ENCODE measurements at regions of chr19 and their contacts with region 1.

Region 1: DNA sequence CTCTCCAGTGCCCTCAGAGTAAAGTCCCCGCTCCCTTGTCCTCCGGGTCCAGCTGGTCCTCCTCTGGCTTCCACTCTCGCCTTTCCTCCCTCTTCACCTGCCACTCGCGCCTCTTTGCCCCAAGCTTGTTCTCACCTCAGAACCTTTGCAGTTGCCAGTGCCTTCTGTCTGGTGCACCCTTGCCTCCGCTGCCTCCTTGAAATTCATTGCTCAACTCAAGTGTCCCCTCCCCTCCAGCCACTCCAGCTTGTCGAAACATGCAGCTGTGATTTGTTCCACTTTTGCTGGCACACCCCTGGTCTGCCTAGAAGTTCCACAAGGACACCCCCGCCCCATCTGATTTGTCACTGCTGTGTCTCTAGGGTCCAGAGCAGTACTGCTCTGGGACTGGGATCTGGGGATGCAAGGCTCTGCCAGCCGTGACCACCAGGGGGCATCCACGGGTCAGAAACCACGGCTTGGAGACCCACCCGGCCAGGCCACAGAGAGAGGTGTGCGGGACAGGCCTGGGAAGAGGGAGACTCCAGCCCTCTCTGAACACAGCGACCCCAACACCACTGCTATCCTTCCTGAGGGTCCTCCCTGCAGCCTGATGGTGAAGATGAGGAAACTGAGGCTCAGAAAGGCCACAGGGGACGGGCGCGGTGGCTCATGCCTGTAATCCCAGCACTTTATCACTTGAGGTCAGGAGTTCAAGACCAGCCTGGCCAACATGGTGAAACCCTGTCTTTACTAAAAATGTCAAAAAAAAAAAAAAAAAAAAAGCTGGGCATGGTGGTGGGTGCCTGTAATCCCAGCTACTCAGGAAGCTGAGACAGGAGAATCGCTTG is 49.9 kb downstream of the AP1M1 start:
- DNase-seq: peak; percentile 87
- H3K4me3 Mint-ChIP-seq: no peak overlapping the region
- H3K27ac Mint-ChIP-seq: peak overlapping the region; percentile 55
- H3K4me1 Mint-ChIP-seq: peaks cover 28% of the 10 kb centered on the region
- H3K27me3 Mint-ChIP-seq: peaks cover 19% of the 10 kb centered on the region

Region 2: GRCh38 chr19:16197622-16198369 is 49.8 kb before region 1 on chr19 and contains the start of gene AP1M1:
- CTCF ChIA-PET with region 1: no interaction called
- POLR2A ChIA-PET with region 1: no interaction called
- DNase-seq: peak; percentile 99
- H3K4me3 Mint-ChIP-seq: peak within 1 kb of the TSS; percentile 87
- H3K27ac Mint-ChIP-seq: peak within 1 kb of the TSS; percentile 95
- H3K4me1 Mint-ChIP-seq: peaks cover 55% of the 10 kb centered on the region
- H3K27me3 Mint-ChIP-seq: no peaks in the 10 kb centered on the region
- total RNA-seq, gene AP1M1: 131 to 151 TPM

Region 3: GRCh38 chr19:16266586-16266942 is 19.0 kb after region 1 on chr19:
- CTCF ChIA-PET with region 1: interaction called, 12 read pairs
- POLR2A ChIA-PET with region 1: interaction called, 5 read pairs
- DNase-seq: peak; percentile 86
- H3K4me3 Mint-ChIP-seq: peak overlapping the region; percentile 2
- H3K27ac Mint-ChIP-seq: peak overlapping the region; percentile 76
- H3K4me1 Mint-ChIP-seq: peaks cover 62% of the 10 kb centered on the region
- H3K27me3 Mint-ChIP-seq: peaks cover 11% of the 10 kb centered on the region

Region 4: DNA sequence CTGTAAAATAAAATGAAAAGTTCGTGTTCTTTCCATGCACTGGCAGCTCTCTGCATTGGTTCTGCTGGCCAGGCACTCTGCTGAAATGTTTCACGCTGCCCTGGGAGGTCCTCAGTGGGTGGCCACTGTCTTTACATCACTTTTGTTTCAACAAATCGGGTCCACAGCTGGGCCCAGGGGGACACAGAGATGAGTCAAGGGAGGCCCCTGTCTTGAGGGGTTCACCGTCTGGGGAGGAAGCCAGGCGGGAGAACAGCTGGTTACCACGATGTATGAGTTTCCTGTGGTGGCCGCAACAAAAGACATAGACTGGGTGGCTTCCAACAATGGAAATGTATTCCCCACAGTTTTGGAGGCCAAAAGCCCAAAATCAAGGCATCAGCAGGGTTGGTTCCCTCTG is 71.9 kb after region 1 on chr19:
- CTCF ChIA-PET with region 1: interaction called, 12 read pairs
- POLR2A ChIA-PET with region 1: interaction called, 31 read pairs
- DNase-seq: no peak
- H3K4me3 Mint-ChIP-seq: no peak overlapping the region
- H3K27ac Mint-ChIP-seq: no peak overlapping the region
- H3K4me1 Mint-ChIP-seq: peaks cover 21% of the 10 kb centered on the region
- H3K27me3 Mint-ChIP-seq: peaks cover 40% of the 10 kb centered on the region

Region 5: DNA sequence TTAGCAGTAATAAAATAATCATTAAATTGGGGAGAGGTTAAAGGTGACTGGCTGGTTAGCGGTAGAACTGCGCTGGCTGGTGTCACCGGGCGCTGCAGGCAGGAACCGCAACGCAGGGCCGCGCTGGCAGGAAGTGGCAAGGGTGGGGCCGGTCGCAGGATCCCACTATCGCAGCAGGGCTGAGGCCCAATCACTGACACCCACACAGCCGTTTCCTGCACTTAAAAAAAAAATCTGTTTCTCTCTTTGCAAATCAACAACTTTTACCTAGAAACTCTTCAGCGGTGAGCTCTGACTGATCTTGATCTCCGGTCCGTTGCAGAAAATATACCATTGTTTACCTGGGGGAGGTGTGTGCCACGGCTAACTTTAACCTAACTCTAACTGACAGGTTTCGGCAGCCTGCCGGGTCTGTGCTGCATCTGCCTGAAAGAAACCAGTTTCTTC is 124.0 kb after region 1 on chr19:
- CTCF ChIA-PET with region 1: interaction called, 17 read pairs
- POLR2A ChIA-PET with region 1: interaction called, 41 read pairs
- DNase-seq: peak; percentile 96
- H3K4me3 Mint-ChIP-seq: no peak overlapping the region
- H3K27ac Mint-ChIP-seq: no peak overlapping the region
- H3K4me1 Mint-ChIP-seq: peaks cover 7% of the 10 kb centered on the region
- H3K27me3 Mint-ChIP-seq: peaks cover 2% of the 10 kb centered on the region

Region 6: DNA sequence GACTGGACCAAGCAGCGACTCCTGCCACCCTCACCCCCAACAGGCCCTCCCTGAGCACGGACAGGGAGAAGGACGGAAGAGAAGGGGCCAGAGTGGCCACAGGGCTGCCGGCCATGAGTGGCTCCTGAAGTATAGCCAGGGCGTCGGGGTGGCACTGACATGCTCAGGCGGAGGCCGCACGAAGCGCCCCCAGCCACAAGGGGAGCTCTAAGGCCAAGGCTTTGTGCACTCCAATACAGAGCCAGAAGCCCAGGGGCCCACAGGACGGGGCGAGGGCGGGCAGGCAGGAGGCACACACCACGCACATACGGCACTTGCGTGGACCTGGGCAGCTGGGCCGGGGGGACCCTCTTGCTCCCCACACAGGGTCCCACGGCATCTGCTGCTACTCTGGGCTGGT is 129.1 kb after region 1 on chr19:
- CTCF ChIA-PET with region 1: interaction called, 121 read pairs
- POLR2A ChIA-PET with region 1: interaction called, 41 read pairs
- DNase-seq: peak; percentile 35
- H3K4me3 Mint-ChIP-seq: no peak overlapping the region
- H3K27ac Mint-ChIP-seq: no peak overlapping the region
- H3K4me1 Mint-ChIP-seq: peaks cover 16% of the 10 kb centered on the region
- H3K27me3 Mint-ChIP-seq: no peaks in the 10 kb centered on the region

Region 7: DNA sequence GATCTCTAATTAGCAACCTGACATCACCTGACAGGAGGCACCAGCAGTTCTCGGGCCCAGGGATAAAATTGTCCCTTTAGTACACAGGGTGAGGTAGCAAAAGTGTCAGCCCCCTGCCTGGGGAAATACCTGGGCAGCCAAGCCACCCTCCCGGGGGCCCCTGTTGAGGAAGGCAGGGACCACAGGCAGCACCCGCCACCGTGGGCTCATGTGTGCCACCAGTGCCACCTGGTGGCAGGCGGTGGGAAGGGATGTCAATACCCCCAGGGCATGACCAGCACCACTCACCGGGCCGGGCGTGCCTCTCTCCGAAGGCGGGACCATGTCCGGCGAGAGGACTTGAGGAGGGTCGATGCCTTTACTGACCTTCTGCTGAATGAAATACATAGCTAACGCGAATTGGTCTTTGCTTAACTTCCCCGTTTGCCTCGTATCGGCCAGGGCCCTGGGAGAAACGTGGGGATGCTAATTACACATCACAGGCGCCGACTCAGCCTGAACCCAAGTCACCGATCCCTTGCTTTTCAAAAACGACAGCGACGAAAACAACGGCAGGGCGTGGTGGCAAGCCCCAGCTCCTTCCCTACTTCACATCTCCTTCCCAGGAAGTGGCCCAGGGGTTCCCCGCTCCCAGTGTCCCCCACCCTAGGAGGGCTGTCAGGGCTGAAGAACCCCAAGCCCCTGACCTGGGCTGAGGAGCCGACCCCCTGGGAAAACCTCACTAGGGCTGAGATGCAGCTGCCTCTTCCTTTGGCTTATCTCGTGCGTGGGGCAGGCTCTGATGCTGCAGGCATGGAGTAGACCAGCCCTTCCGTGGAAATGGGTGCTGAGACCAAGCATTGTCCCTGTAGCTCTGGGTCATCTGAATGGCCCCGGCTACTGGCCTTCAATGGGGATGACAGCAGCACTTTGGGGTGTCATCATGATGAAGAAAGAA is 170.4 kb after region 1 on chr19:
- CTCF ChIA-PET with region 1: interaction called, 22 read pairs
- POLR2A ChIA-PET with region 1: no interaction called
- DNase-seq: peak; percentile 70
- H3K4me3 Mint-ChIP-seq: no peak overlapping the region
- H3K27ac Mint-ChIP-seq: no peak overlapping the region
- H3K4me1 Mint-ChIP-seq: peaks cover 4% of the 10 kb centered on the region
- H3K27me3 Mint-ChIP-seq: no peaks in the 10 kb centered on the region